Astrocyte of the cerebellum (primary cell): ENCODE measurements at regions of chr1 and their contacts with region 1.

Region 1: DNA sequence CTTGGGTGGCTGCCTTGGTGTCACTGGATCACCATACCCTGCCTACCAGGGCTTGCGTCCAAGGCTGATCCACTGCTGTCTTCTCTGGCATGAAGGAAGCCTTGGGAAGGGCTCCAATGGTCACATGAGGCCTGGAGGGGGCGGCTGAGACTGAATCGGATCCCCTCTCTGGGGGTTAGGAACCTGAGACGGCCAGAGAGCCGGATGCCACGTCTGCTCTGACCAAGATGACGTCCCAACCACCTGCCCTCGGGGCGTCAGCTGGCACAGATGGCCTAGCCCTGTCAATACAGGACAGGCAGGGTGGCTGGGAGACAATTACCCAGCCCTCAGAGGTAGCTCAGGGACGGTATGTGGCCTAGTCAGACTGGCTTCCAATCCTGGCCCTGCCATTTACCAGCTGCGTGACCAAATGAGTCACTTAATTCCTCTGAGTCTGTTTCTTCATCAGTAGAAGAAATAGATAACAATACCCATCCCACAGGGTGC is 5.4 kb downstream of the TRIM62 start:
- DNase-seq: no peak
- H3K4me3 ChIP-seq: no peak overlapping the region
- CTCF ChIP-seq: no peak

Region 2: DNA sequence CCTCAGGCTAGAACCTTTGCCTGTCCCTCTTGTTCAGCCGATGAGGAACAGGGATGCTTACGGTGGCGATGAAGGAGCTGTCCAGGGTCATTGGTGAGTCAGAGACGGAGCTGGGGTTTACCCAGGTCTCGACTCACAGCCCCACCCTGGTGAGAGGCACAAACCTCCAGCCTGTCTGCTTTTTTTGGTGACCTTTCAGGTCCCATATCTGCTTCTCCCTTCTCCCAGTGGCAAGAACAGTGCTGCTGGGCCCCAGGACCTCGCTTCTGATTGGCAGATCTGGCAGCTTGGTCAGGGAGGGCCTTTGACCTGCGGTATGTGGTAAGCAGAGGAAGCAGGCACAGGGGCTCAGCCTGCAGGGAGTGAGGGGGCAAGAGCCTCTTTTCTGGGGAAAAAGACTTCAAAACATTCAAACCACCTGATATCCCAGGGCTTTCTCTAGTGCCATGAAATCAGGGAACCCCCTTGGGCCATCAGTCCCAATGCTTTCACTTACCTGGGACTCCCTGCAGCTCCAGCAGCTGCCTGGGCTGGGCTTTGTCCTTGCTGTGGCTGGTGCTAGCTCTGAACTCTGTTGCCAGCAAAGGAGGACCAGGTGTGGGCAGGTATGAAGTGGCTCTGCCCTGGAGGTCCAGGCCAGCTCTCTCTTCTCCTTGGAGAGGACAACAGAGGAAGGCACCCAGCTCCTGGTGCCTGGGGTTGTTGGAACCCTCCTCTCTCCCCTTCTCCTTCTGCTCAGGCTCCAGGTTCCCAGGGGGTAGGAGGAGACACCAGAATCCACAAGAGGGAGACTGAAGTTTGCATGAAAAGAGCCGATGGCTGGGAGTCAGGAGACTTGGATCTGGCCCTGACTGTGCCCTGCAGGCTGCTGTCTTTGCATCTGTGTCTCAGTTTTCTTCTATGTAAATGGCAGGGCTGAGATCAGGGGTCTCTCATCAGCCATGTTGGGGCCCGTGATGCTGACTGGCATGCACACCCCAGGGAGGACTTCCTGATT is 36.0 kb before region 1 on chr1:
- in situ Hi-C with region 1: loop called (anchors 5 kb)
- DNase-seq: no peak
- H3K4me3 ChIP-seq: no peak overlapping the region
- CTCF ChIP-seq: peak; percentile 28